CD8-positive, alpha-beta T cell (primary cell): ENCODE measurements at regions of chr17 and their contacts with region 1.

Region 1: GRCh38 chr17:79009397-79010308 is at the start of gene CANT1:
- DNase-seq: peak; percentile 64 to 93 (median 82)
- ATAC-seq: peak; percentile 93
- H3K4me3 ChIP-seq: peak within 1 kb of the TSS; percentile 77 to 91
- H3K4me3 Mint-ChIP-seq: peak within 1 kb of the TSS; percentile 91
- H3K27ac ChIP-seq: peak within 1 kb of the TSS; percentile 75 to 77
- H3K27ac Mint-ChIP-seq: peak within 1 kb of the TSS; percentile 93
- H3K4me1 ChIP-seq: peaks cover 47% of the 10 kb centered on the region
- H3K4me1 Mint-ChIP-seq: peaks cover 46% of the 10 kb centered on the region
- H3K27me3 ChIP-seq: no peaks in the 10 kb centered on the region
- H3K27me3 Mint-ChIP-seq: no peaks in the 10 kb centered on the region
- CTCF ChIP-seq: no peak
- total RNA-seq, gene CANT1: 41.6 to 48.9 TPM

Region 2: GRCh38 chr17:79019632-79020584 is 10.3 kb after region 1 on chr17:
- CTCF ChIA-PET with region 1: no interaction called
- POLR2A ChIA-PET with region 1: no interaction called
- intact Hi-C with region 1: loop called in 1 of 2 experiments (anchors 2 kb)
- DNase-seq: peak in 7 of 9 experiments; percentile 18 to 66 (median 59)
- ATAC-seq: peak; percentile 61
- H3K4me3 ChIP-seq: no peak overlapping the region
- H3K4me3 Mint-ChIP-seq: no peak overlapping the region
- H3K27ac ChIP-seq: no peak overlapping the region
- H3K27ac Mint-ChIP-seq: no peak overlapping the region
- H3K4me1 ChIP-seq: peaks cover 7% of the 10 kb centered on the region
- H3K4me1 Mint-ChIP-seq: peaks cover 9% of the 10 kb centered on the region
- H3K27me3 ChIP-seq: peaks cover 0 to 1% of the 10 kb centered on the region in 2 experiments
- H3K27me3 Mint-ChIP-seq: no peaks in the 10 kb centered on the region
- CTCF ChIP-seq: peak; percentile 76

Region 3: GRCh38 chr17:79036596-79036995 is 26.9 kb after region 1 on chr17:
- CTCF ChIA-PET with region 1: no interaction called
- POLR2A ChIA-PET with region 1: no interaction called
- intact Hi-C with region 1: no loop called
- DNase-seq: no peak
- ATAC-seq: no peak
- H3K4me3 ChIP-seq: no peak overlapping the region
- H3K4me3 Mint-ChIP-seq: no peak overlapping the region
- H3K27ac ChIP-seq: no peak overlapping the region
- H3K27ac Mint-ChIP-seq: no peak overlapping the region
- H3K4me1 ChIP-seq: no peaks in the 10 kb centered on the region
- H3K4me1 Mint-ChIP-seq: no peaks in the 10 kb centered on the region
- H3K27me3 ChIP-seq: no peaks in the 10 kb centered on the region
- H3K27me3 Mint-ChIP-seq: peaks cover 6% of the 10 kb centered on the region
- CTCF ChIP-seq: no peak

Region 4: DNA sequence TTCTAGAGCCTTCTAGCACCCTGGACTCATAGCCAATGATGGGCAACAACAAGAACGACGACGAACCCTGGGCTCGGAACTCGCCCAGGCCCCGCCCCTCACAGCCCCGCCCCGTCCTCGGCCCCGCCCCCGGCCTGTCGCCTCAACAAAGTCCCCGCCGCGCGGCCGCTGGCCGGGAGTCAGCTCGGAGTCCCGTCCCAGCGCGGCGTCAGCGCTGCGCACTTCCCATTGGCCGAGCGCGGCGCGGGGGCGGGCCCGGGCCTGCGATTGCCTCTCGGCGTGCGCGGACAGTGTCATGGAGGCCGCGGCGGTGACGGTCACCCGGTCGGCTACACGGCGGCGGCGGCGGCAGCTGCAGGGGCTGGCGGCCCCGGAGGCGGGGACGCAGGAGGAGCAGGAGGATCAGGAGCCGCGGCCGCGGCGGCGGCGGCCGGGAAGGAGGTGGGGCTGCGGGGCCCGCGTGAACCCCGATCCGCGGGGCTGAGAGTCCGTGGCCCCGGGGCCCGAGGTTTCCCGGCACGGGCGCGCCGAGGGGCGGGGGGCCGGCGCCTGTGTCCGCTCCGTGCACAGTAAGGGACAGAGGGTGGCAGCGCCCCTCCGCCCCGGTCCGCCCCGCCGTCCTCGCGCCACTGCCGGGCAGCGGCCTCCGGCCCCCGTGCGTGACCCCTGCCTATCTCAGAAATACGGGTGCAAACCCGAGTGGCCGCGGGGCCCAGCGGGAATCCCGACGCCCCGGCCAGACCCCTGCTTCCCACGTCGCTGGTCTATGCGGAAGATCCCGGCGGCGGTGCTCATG is 65.2 kb after region 1 on chr17 and contains the start of gene ENGASE:
- CTCF ChIA-PET with region 1: no interaction called
- POLR2A ChIA-PET with region 1: no interaction called
- intact Hi-C with region 1: loop called in 1 of 2 experiments (anchors 1 kb)
- DNase-seq: peak; percentile 80 to 95 (median 89)
- ATAC-seq: peak; percentile 96
- H3K4me3 ChIP-seq: peak within 1 kb of the TSS; percentile 52 to 71
- H3K4me3 Mint-ChIP-seq: peak within 1 kb of the TSS; percentile 94
- H3K27ac ChIP-seq: peak within 1 kb of the TSS; percentile 48 to 63
- H3K27ac Mint-ChIP-seq: peak within 1 kb of the TSS; percentile 90
- H3K4me1 ChIP-seq: peaks cover 16% of the 10 kb centered on the region
- H3K4me1 Mint-ChIP-seq: peaks cover 19% of the 10 kb centered on the region
- H3K27me3 ChIP-seq: no peaks in the 10 kb centered on the region
- H3K27me3 Mint-ChIP-seq: no peaks in the 10 kb centered on the region
- CTCF ChIP-seq: no peak
- total RNA-seq, gene ENGASE: 84.1 to 92.8 TPM